ENCODE measurements at regions of chrX and their contacts with region 1.

Region 1: GRCh38 chrX:49947781-49948180 is 25.4 kb downstream of the CLCN5 start:
- DNase-seq: no peak
- ATAC-seq: no peak
- H3K4me3 ChIP-seq: no peak overlapping the region
- H3K27ac ChIP-seq: no peak overlapping the region
- H3K4me1 ChIP-seq: no peaks in the 10 kb centered on the region
- H3K27me3 ChIP-seq: no peaks in the 10 kb centered on the region
- CTCF ChIP-seq: no peak
- POLR2A ChIP-seq: no peak
- RAD21 ChIP-seq: no peak

Region 2: DNA sequence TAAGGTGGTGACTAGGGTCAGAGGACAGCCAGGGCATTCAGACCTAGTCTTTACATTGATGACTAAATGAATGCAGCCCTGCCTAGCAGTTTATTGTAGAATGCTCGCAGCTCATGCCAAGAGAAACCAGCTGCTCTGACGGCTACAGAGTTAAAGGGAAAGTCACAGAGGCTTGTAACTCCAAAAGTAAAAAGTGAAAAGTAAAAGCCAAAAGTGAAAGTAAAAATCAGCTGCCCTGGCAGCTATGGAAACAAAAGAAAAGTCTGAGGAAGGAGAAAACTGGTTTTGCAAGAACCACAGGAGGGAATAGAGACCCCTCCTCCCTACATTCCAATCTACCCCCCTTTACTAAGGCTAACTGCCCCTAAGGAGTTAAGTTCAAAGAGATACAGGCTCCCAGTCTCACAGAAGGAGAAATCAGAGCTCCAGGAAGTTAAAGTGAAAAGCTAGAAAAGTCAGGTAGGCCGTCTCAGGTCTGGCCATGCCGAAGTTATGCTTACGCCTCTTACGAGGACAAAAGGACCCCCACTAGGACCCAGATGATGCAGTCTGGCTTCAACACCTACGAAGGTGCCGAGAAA is 638.3 kb before region 1 on chrX:
- CTCF ChIA-PET with region 1: no interaction called
- POLR2A ChIA-PET with region 1: interaction called, 12 read pairs
- dilution Hi-C with region 1: no loop called
- in situ Hi-C with region 1: no loop called
- intact Hi-C with region 1: no loop called
- DNase-seq: peak; percentile 22
- ATAC-seq: peak; percentile 72
- H3K4me3 ChIP-seq: peak overlapping the region; percentile 7
- H3K27ac ChIP-seq: peak overlapping the region; percentile 23; the same call in 1 of the 2 replicates
- H3K4me1 ChIP-seq: 0 out of 2 replicates have a peak, but pooled peaks cover 3% of the 10 kb centered on the region
- H3K27me3 ChIP-seq: peaks cover 4% of the 10 kb centered on the region; the same call in 1 of the 2 replicates
- CTCF ChIP-seq: no peak
- POLR2A ChIP-seq: no peak
- RAD21 ChIP-seq: no peak

Region 3: DNA sequence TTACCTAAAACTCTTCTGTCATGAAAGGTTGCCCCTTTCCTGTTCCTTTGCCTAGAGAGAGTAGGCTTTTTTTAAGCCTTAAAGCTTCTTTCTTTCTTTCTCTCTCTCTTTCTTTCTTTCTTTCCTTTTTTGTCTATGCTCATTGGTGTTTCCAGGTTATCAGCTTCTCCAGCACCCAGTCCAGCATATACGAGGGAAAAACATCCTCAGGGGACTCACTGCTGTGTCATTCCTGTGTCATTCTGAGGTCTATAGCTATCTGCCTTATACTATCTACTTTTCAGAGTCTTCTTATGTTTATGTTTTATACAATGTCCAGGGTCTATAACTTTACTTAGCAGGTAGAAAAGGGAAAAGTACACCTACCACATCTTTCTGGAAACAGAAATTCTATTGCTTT is 79.0 kb before region 1 on chrX:
- CTCF ChIA-PET with region 1: no interaction called
- POLR2A ChIA-PET with region 1: no interaction called
- dilution Hi-C with region 1: no loop called
- in situ Hi-C with region 1: no loop called
- intact Hi-C with region 1: no loop called
- DNase-seq: no peak
- ATAC-seq: no peak
- H3K4me3 ChIP-seq: no peak overlapping the region
- H3K27ac ChIP-seq: no peak overlapping the region
- H3K4me1 ChIP-seq: no peaks in the 10 kb centered on the region
- H3K27me3 ChIP-seq: peaks cover 12% of the 10 kb centered on the region
- CTCF ChIP-seq: no peak
- POLR2A ChIP-seq: no peak
- RAD21 ChIP-seq: no peak

Region 4: GRCh38 chrX:50036426-50036825 is 88.6 kb after region 1 on chrX:
- CTCF ChIA-PET with region 1: no interaction called
- POLR2A ChIA-PET with region 1: no interaction called
- dilution Hi-C with region 1: no loop called
- in situ Hi-C with region 1: no loop called
- intact Hi-C with region 1: no loop called
- DNase-seq: no peak
- ATAC-seq: no peak
- H3K4me3 ChIP-seq: no peak overlapping the region
- H3K27ac ChIP-seq: no peak overlapping the region
- H3K4me1 ChIP-seq: no peaks in the 10 kb centered on the region
- H3K27me3 ChIP-seq: no peaks in the 10 kb centered on the region
- CTCF ChIP-seq: no peak
- POLR2A ChIP-seq: no peak
- RAD21 ChIP-seq: no peak

Measured in IMR-90 (cell line).